AG04450 (cell line): ENCODE measurements at regions of chrX and their contacts with region 1.

Region 1: DNA sequence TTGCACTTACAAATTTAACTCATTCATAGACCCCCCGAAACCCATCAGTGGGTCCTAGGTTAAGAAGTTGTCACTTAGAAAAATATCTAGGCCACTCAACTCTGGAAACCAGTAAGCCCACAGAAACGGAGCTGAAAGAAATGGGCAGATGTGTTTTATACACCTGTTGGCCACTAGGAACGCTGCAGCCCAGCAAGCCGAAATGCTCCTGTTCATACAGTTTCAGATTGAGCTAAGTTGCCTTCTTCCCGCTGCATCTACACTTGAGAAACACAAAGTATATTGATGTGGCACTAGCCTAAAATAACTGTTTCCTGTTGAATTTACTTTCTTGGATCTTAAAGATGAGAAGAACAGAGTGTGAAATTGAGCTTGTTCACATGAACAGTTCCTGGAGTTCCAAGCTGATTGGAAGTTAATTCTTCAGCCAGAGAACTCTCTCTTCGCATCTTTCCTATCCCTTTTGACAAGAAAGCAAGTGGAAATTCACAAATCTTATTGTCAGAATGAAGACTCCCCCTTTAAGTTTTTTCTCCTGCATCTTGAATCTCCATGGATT is 174.1 kb downstream of the RBMX2 start:
- DNase-seq: peak; percentile 1
- H3K4me3 ChIP-seq: no peak overlapping the region
- H3K27ac ChIP-seq: no peak overlapping the region
- H3K27me3 ChIP-seq: no peaks in the 10 kb centered on the region
- CTCF ChIP-seq: peak; percentile 86

Region 2: GRCh38 chrX:130539721-130540321 is 36.1 kb before region 1 on chrX:
- CTCF ChIA-PET with region 1: interaction called, 19 read pairs
- POLR2A ChIA-PET with region 1: no interaction called
- DNase-seq: no peak
- H3K4me3 ChIP-seq: no peak overlapping the region
- H3K27ac ChIP-seq: no peak overlapping the region
- H3K27me3 ChIP-seq: no peaks in the 10 kb centered on the region
- CTCF ChIP-seq: peak; percentile 73